ENCODE measurements at regions of chr1 and their contacts with region 1.

Region 1: GRCh38 chr1:205791568-205792180 is 16.4 kb upstream of the RAB29 start:
- ATAC-seq: peak; percentile 54 to 94 (median 90)
- H3K4me3 ChIP-seq: no peak overlapping the region
- H3K27ac ChIP-seq: no peak overlapping the region
- H3K4me1 ChIP-seq: peaks cover 0 to 12% of the 10 kb centered on the region in 2 donors

Region 2: DNA sequence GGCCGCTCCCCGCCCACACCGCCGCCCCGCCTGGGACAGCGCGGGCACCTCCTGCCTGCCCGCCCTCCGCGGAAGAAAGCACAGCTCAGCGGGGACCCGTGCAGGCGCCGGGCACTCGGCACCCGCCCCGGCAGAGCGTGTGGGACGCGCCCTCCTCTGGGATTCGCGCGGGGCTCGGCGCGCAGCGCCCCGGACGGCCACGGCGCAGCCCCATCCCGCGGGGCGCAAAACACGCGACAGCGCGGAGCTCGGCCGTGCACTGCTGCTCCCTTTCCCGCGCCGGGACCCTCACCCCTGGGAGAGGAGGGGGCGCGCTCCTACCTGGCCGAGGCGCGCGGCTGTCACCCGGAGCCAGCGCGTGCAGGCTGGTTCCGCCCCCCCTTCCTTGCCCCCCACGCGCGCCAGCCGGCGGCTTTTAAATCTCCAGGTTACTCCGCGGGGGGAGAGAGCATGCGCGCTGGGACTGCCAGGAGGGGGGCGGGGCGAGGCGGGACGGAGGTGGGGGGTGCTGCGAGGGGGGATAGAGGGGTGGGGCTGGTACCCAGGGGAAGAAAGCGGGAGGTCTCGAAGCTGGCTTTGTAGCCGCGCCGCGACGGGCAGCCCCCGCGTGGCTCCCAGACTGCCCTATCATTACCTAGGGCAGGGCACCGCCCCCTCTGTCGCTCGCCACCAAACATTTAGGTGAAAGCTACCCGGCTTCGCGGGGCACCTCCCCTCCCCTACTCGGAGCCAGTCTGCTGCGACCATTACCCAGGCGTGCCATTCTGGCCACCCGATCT is 111.4 kb before region 1 on chr1 and contains the start of gene SLC45A3:
- in situ Hi-C with region 1: no loop called
- ATAC-seq: peak; percentile 85 to 90 (median 86)
- H3K4me3 ChIP-seq: peak within 1 kb of the TSS; percentile 46 to 64 (median 55)
- H3K27ac ChIP-seq: no peak within 1 kb of the TSS
- H3K4me1 ChIP-seq: peaks cover 6 to 8% of the 10 kb centered on the region in 2 donors
- total RNA-seq, gene SLC45A3: 0.40 to 2.7 (median 2.0) TPM

Region 3: GRCh38 chr1:205919026-205919746 is 127.5 kb after region 1 on chr1:
- in situ Hi-C with region 1: loop called in 1 of 9 experiments (anchors 10 kb)
- ATAC-seq: peak; percentile 94 to 98 (median 96)
- H3K4me3 ChIP-seq: no peak overlapping the region
- H3K27ac ChIP-seq: no peak overlapping the region
- H3K4me1 ChIP-seq: peaks cover 0 to 4% of the 10 kb centered on the region in 2 donors

Measured in motor neuron (in vitro differentiated cells).